ENCODE measurements at regions of chr15 and their contacts with region 1.

Region 1: DNA sequence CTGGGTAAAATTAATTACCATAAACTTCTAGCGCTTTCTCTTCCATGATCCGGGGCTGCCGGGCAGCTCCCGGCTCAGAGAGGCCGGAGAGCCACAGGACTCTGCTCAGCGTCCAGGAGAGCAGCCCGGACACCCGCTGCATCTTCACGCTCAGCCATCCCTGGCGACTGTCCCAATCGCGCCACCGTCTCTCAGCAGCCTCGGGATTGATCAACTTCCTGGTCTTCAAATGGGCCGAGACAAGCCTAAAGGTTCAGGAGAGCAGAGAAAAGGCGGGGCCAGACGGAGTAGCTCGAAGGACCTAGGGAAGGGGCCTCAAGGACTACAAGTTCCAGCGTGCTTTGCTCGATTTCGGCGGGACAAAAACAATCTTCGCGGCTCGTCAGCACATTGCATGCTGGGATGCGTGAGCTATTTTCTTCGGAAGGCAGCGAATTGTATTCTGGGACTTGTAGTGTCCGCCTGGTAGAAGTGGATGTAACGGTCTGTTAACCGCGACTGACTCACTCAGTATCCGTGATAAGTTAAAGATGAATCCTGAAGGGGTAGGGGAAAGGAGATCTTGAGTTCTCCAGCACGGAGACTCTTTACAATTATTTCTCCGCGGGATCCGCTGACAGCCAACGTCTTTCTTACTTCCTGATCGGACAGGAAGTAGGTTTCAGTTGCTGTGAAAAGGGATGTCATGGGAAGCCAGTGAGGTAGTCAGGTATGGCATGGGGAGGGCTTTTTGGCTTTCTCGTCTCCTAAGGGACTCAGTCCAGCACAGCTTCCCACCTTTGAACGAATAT is at the start of gene CIAO2A:
- DNase-seq: peak; percentile 96 to 97
- ATAC-seq: peak; percentile 81 to 85
- H3K4me3 ChIP-seq: peak within 1 kb of the TSS; percentile 74 to 85 (median 77)
- H3K27ac ChIP-seq: peak within 1 kb of the TSS; percentile 91 to 96 (median 93)
- H3K4me1 ChIP-seq: peaks cover 62 to 65% of the 10 kb centered on the region in 2 donors
- H3K27me3 ChIP-seq: no peaks in the 10 kb centered on the region
- CTCF ChIP-seq: no peak
- POLR2A ChIP-seq: peak; percentile 79 to 84
- total RNA-seq, gene CIAO2A: 26.6 to 65.2 (median 55.1) TPM

Region 2: DNA sequence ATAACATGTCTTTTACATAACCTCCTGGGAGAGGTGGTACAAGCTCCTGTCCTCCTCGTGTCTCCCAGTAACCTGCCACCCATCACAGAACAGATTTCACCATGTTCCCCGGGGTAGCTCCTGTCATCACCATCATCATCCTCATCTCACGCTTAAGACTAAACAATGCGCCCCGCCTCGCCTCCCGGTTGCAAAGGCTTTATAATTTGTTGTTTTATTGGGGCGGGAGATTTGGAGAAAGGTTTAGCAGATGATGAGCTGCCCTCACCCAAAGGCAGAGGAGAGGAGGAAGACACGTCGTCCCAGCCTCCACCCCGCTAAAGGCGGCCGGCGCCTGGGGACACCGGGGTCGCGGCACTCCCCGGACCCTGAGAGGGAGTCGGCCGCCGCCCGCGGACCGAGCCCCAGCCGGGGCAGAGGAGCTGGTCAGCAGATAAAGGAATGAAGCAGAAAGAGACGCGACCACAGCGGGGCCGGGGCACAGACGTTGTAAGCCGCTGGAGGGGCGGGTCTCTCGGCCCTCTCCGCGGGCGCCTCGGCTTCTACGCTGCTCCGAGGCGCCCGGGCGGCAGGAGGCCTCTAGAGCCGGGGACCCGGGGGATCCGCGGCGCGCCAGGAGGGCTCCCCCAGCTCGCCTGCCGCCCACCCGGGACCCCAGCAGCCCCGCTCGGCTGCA is 260.7 kb before region 1 on chr15:
- in situ Hi-C with region 1: no loop called
- intact Hi-C with region 1: loop called (anchors 1 kb)
- DNase-seq: peak; percentile 5 to 46
- ATAC-seq: peak; percentile 53 to 68
- H3K4me3 ChIP-seq: peak overlapping the region; percentile 83 to 95 (median 90)
- H3K27ac ChIP-seq: peak overlapping the region; percentile 90 to 98 (median 96)
- H3K4me1 ChIP-seq: peaks cover 24 to 35% of the 10 kb centered on the region in 2 donors
- H3K27me3 ChIP-seq: no peaks in the 10 kb centered on the region
- CTCF ChIP-seq: no peak
- POLR2A ChIP-seq: no peak

Region 3: GRCh38 chr15:64019764-64020163 is 74.1 kb before region 1 on chr15:
- in situ Hi-C with region 1: no loop called
- intact Hi-C with region 1: loop called (anchors 5 kb)
- DNase-seq: peak; percentile 89 to 90
- ATAC-seq: peak; percentile 76 to 78
- H3K4me3 ChIP-seq: no peak overlapping the region
- H3K27ac ChIP-seq: peak overlapping the region; percentile 84 to 94 (median 90)
- H3K4me1 ChIP-seq: peaks cover 95 to 98% of the 10 kb centered on the region in 2 donors
- H3K27me3 ChIP-seq: no peaks in the 10 kb centered on the region
- CTCF ChIP-seq: no peak
- POLR2A ChIP-seq: peak; percentile 17 to 21

Measured in gastrocnemius medialis (tissue), 4 donors.